Activated naive CD4-positive, alpha-beta T cell treated with anti-CD3 and anti-CD28 coated beads for 36 hours (primary cell): ENCODE measurements at regions of chr1 and their contacts with region 1.

Region 1: GRCh38 chr1:167066333-167067122 is 23.6 kb downstream of the GPA33 start:
- DNase-seq: peak; percentile 82
- H3K4me3 Mint-ChIP-seq: no peak overlapping the region
- H3K27ac Mint-ChIP-seq: no peak overlapping the region
- H3K4me1 Mint-ChIP-seq: peaks cover 2% of the 10 kb centered on the region
- H3K27me3 Mint-ChIP-seq: no peaks in the 10 kb centered on the region

Region 2: DNA sequence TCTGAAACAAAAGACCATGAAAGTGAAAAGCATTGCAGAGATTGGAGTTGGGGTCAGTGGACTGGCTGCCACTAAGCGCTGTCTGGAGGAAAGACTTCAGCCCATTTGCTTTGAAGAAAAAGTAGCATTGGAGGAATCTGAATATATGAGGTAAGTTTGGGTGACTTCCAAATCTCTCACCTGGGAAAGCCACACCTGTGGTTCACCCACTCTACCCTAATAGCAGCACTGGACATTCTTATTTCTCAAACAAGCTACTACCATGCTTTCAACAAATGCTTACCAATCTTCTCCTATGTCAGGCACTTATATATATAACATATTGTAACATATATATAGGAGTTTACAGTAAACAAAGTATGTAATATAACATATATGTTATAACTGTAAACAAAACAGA is 303.2 kb before region 1 on chr1:
- CTCF ChIA-PET with region 1: no interaction called
- intact Hi-C with region 1: no loop called
- DNase-seq: no peak
- H3K4me3 Mint-ChIP-seq: no peak overlapping the region
- H3K27ac Mint-ChIP-seq: no peak overlapping the region
- H3K4me1 Mint-ChIP-seq: no peaks in the 10 kb centered on the region
- H3K27me3 Mint-ChIP-seq: peaks cover 3% of the 10 kb centered on the region

Region 3: DNA sequence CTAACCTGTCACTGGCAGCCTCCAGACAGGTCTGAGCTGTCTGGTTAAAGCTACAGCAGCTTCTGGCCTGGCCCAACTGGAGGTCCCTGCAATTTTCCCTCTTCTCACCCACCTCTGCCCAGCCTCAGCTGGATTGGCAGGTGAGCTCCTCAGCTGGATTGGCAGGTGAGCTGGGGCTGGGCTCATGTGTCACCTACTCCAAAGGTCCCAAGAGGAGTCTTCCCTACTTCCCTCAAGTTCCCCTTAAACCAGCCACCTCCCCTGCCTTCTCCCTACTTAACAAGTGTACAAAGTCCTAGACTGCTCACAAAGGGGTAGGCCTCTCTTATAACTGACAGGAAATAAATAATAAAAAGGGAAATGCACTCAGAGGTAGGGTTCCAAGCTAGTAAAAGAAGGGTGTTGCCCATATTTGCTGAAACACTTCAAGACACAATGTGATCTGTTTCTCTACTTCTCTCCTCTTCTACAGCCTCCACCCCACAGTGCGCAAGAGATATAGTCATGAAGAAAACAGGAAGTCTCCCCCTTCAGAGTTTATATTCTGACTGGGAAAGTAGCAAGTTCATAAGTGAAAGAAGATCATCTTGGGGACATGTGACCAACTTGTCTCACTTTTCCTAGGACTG is 23.9 kb after region 1 on chr1 and contains the start of gene GPA33:
- CTCF ChIA-PET with region 1: interaction called, 5 read pairs
- intact Hi-C with region 1: loop called (anchors 1 kb)
- DNase-seq: peak; percentile 61
- H3K4me3 Mint-ChIP-seq: peak within 1 kb of the TSS; percentile 21
- H3K27ac Mint-ChIP-seq: peak within 1 kb of the TSS; percentile 88
- H3K4me1 Mint-ChIP-seq: peaks cover 50% of the 10 kb centered on the region
- H3K27me3 Mint-ChIP-seq: no peaks in the 10 kb centered on the region
- total RNA-seq, gene GPA33: 1.2 to 1.4 TPM

Region 4: GRCh38 chr1:167121375-167122120 is 55.0 kb after region 1 on chr1:
- CTCF ChIA-PET with region 1: interaction called, 28 read pairs
- intact Hi-C with region 1: loop called (anchors 1 kb)
- DNase-seq: peak; percentile 58
- H3K4me3 Mint-ChIP-seq: peak overlapping the region; percentile 81
- H3K27ac Mint-ChIP-seq: no peak overlapping the region
- H3K4me1 Mint-ChIP-seq: peaks cover 3% of the 10 kb centered on the region
- H3K27me3 Mint-ChIP-seq: peaks cover 2% of the 10 kb centered on the region

Region 5: DNA sequence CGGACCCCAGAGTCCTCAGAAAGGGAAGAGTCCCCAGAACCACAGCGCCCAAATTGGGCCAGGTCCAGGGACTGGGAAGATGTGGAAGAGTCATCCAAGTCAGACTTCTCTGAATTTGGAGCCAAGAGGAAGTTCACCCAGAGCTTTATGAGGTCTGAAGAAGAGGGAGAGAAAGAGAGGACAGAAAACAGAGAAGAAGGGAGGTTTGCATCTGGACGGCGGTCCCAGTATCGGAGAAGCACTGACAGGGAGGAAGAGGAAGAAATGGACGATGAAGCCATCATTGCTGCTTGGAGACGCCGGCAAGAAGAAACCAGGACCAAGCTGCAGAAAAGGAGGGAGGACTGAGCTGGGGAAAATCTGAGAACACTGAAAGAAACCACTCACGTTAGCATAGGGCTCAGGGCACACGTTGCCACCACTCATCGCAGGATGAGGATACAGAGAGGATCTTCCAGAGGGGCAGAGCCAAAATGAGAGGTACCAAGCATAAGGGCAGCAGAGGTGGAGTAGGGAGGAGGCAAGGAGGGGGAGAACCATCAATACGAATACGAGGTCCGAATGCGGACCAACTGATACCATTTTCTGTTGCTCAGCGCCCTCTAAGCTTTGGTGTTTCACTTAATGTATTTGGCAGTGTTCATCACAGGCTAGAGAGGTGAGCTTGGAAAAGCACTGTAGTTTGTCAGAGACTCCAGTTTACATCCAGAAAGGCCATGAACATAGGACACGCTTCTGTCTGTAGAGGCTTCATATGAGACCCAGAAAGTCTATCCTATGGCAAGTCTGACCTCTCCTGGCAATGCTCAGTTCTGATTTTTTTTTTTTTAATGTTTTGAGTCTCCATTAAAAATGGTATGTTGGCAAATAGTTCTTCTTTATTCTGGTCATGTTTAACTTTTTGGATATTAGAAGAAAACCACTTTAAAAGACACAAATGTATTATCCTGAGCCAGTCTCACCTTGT is 62.0 kb after region 1 on chr1:
- CTCF ChIA-PET with region 1: interaction called, 28 read pairs
- intact Hi-C with region 1: no loop called
- DNase-seq: no peak
- H3K4me3 Mint-ChIP-seq: no peak overlapping the region
- H3K27ac Mint-ChIP-seq: no peak overlapping the region
- H3K4me1 Mint-ChIP-seq: no peaks in the 10 kb centered on the region
- H3K27me3 Mint-ChIP-seq: peaks cover 11% of the 10 kb centered on the region

Region 6: GRCh38 chr1:167409183-167409582 is 342.7 kb after region 1 on chr1:
- CTCF ChIA-PET with region 1: no interaction called
- intact Hi-C with region 1: loop called (anchors 5 kb)
- DNase-seq: no peak
- H3K4me3 Mint-ChIP-seq: no peak overlapping the region
- H3K27ac Mint-ChIP-seq: no peak overlapping the region
- H3K4me1 Mint-ChIP-seq: peaks cover 15% of the 10 kb centered on the region
- H3K27me3 Mint-ChIP-seq: no peaks in the 10 kb centered on the region